AG04450 (cell line): ENCODE measurements at regions of chr19 and their contacts with region 1.

Region 1: DNA sequence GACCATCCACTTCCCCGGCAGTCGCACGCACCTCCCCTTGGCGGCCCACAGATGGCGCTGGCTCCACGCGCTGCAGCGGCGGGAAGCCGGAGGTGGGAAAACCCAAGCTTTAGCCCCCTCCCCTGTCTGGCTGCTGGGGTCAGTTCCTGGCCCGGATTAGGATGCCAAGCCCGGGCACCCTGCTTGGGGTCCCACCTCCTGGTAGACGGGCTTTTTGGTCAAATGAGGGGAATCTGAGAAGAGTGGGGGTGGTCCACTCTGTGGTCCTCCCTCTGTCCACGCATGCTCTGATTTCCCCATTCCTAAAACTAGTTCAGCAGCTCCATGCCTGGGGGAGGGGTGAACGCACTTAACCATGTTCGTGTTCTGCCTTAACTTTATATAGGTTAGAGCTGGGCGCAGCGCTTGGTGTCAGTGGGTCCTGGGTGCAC is 8.1 kb upstream of the ADGRE2 start:
- DNase-seq: no peak
- H3K4me3 ChIP-seq: no peak overlapping the region
- H3K27ac ChIP-seq: no peak overlapping the region
- H3K27me3 ChIP-seq: no peaks in the 10 kb centered on the region
- CTCF ChIP-seq: peak; percentile 50

Region 2: DNA sequence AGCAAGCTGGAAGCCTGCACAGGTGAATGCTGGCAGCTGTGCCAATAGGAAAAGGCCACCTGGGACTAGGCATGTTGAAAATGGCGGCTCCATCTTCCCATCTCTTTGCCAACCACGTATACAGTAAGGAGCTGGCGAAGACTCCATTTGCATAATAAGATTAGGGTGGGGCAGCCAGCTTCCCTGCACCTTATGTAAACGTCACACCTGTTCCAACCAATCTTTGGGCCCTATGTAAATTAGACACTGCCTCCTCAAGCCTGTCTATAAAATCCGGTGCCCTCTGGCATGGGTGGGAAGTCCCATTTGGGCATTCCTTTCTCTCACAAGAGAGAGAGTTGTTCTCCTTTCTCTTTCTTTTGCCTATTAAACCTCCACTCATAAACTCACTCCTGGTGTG is 24.8 kb before region 1 on chr19:
- CTCF ChIA-PET with region 1: no interaction called
- POLR2A ChIA-PET with region 1: no interaction called
- DNase-seq: no peak
- H3K4me3 ChIP-seq: no peak overlapping the region
- H3K27ac ChIP-seq: no peak overlapping the region
- H3K27me3 ChIP-seq: no peaks in the 10 kb centered on the region
- CTCF ChIP-seq: no peak

Region 3: GRCh38 chr19:14809272-14810057 is 23.0 kb after region 1 on chr19:
- CTCF ChIA-PET with region 1: no interaction called
- POLR2A ChIA-PET with region 1: no interaction called
- DNase-seq: no peak
- H3K4me3 ChIP-seq: no peak overlapping the region
- H3K27ac ChIP-seq: no peak overlapping the region
- H3K27me3 ChIP-seq: no peaks in the 10 kb centered on the region
- CTCF ChIP-seq: no peak

Region 4: DNA sequence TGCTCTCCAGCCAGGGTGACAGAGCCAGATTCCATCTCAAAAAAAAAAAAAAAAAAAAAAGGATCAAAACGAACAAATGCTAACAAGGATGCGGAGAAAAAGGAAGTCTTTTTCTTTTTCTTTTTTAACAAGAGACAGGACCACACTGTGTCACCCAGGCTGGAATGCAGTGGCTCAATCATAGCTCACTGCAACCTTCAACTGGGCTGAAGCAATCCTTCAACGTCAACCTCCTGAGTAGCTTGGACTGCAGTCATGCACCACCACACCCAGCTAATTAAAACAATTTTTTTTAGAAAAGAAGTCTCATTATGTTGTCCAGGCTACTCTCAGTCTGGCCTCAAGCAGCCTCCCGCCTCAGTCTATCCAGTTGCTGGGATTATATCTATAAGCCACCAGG is 120.3 kb after region 1 on chr19:
- CTCF ChIA-PET with region 1: no interaction called
- POLR2A ChIA-PET with region 1: interaction called, 13 read pairs
- DNase-seq: no peak
- H3K4me3 ChIP-seq: no peak overlapping the region
- H3K27ac ChIP-seq: no peak overlapping the region
- H3K27me3 ChIP-seq: no peaks in the 10 kb centered on the region
- CTCF ChIP-seq: no peak